Caco-2 (cell line): ENCODE measurements at regions of chr11 and their contacts with region 1.

Region 1: GRCh38 chr11:127789927-127790326 is 789.4 kb upstream of the KIRREL3 start:
- DNase-seq: peak; percentile 60 to 71
- H3K4me3 ChIP-seq: no peak overlapping the region
- H3K4me3 Mint-ChIP-seq: no peak overlapping the region
- H3K27ac Mint-ChIP-seq: no peak overlapping the region
- H3K4me1 ChIP-seq: no peaks in the 10 kb centered on the region
- H3K4me1 Mint-ChIP-seq: peaks cover 7% of the 10 kb centered on the region
- H3K27me3 ChIP-seq: no peaks in the 10 kb centered on the region
- H3K27me3 Mint-ChIP-seq: no peaks in the 10 kb centered on the region
- CTCF ChIP-seq: peak; percentile 69 to 77

Region 2: GRCh38 chr11:127470306-127470884 is 319.5 kb before region 1 on chr11:
- CTCF ChIA-PET with region 1: no interaction called
- POLR2A ChIA-PET with region 1: no interaction called
- intact Hi-C with region 1: loop called (anchors 1 kb)
- DNase-seq: peak in 1 of 2 experiments; percentile 29
- H3K4me3 ChIP-seq: no peak overlapping the region
- H3K4me3 Mint-ChIP-seq: no peak overlapping the region
- H3K27ac Mint-ChIP-seq: no peak overlapping the region
- H3K4me1 ChIP-seq: no peaks in the 10 kb centered on the region; the same call in 1 of the 2 replicates
- H3K4me1 Mint-ChIP-seq: no peaks in the 10 kb centered on the region
- H3K27me3 ChIP-seq: no peaks in the 10 kb centered on the region
- H3K27me3 Mint-ChIP-seq: peaks cover 18% of the 10 kb centered on the region
- CTCF ChIP-seq: peak; percentile 24 to 35

Region 3: DNA sequence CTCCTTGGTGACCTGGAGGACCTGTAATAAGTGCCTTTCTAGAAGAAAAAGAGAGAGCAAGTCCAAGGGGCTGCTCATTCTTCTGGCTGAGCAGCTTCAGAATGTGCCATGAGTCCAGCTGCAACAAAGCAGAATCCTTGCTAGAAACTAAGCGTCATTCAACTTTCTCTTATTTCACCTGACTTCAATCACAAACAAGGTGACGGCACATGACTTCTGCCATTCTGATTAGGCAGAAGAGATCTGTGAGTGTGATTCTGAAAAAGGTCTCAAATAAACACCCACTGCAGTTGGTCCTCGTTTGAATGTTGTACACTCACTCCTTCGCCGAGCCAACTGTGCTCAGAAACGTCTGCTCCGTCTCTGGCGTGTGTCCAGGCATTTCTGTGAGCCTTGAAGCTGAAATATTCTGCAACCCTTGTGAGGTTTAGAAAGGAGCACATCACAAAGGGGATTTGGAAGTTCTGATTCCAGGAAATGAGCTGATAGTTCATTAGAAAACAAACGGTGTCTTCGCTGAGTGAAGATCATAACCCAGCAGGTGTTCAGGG is 165.5 kb before region 1 on chr11:
- CTCF ChIA-PET with region 1: no interaction called
- POLR2A ChIA-PET with region 1: no interaction called
- intact Hi-C with region 1: loop called (anchors 1 kb)
- DNase-seq: no peak
- H3K4me3 ChIP-seq: no peak overlapping the region
- H3K4me3 Mint-ChIP-seq: no peak overlapping the region
- H3K27ac Mint-ChIP-seq: no peak overlapping the region
- H3K4me1 ChIP-seq: peaks cover 9% of the 10 kb centered on the region
- H3K4me1 Mint-ChIP-seq: no peaks in the 10 kb centered on the region
- H3K27me3 ChIP-seq: no peaks in the 10 kb centered on the region
- H3K27me3 Mint-ChIP-seq: no peaks in the 10 kb centered on the region
- CTCF ChIP-seq: no peak

Region 4: GRCh38 chr11:127733552-127733951 is 56.4 kb before region 1 on chr11:
- CTCF ChIA-PET with region 1: no interaction called
- POLR2A ChIA-PET with region 1: no interaction called
- intact Hi-C with region 1: loop called (anchors 5 kb)
- DNase-seq: no peak
- H3K4me3 ChIP-seq: no peak overlapping the region
- H3K4me3 Mint-ChIP-seq: no peak overlapping the region
- H3K27ac Mint-ChIP-seq: no peak overlapping the region
- H3K4me1 ChIP-seq: no peaks in the 10 kb centered on the region
- H3K4me1 Mint-ChIP-seq: peaks cover 8% of the 10 kb centered on the region
- H3K27me3 ChIP-seq: no peaks in the 10 kb centered on the region; the same call in 1 of the 2 replicates
- H3K27me3 Mint-ChIP-seq: no peaks in the 10 kb centered on the region
- CTCF ChIP-seq: no peak

Region 5: GRCh38 chr11:127804747-127805400 is 14.9 kb after region 1 on chr11:
- CTCF ChIA-PET with region 1: interaction called, 5 read pairs
- POLR2A ChIA-PET with region 1: no interaction called
- intact Hi-C with region 1: loop called (anchors 2 kb)
- DNase-seq: peak; percentile 79 to 80
- H3K4me3 ChIP-seq: no peak overlapping the region
- H3K4me3 Mint-ChIP-seq: peak overlapping the region; percentile 59
- H3K27ac Mint-ChIP-seq: peak overlapping the region; percentile 87
- H3K4me1 ChIP-seq: peaks cover 41% of the 10 kb centered on the region
- H3K4me1 Mint-ChIP-seq: peaks cover 52% of the 10 kb centered on the region
- H3K27me3 ChIP-seq: no peaks in the 10 kb centered on the region
- H3K27me3 Mint-ChIP-seq: no peaks in the 10 kb centered on the region
- CTCF ChIP-seq: no peak